ENCODE measurements at regions of chr7 and their contacts with region 1.

Region 1: DNA sequence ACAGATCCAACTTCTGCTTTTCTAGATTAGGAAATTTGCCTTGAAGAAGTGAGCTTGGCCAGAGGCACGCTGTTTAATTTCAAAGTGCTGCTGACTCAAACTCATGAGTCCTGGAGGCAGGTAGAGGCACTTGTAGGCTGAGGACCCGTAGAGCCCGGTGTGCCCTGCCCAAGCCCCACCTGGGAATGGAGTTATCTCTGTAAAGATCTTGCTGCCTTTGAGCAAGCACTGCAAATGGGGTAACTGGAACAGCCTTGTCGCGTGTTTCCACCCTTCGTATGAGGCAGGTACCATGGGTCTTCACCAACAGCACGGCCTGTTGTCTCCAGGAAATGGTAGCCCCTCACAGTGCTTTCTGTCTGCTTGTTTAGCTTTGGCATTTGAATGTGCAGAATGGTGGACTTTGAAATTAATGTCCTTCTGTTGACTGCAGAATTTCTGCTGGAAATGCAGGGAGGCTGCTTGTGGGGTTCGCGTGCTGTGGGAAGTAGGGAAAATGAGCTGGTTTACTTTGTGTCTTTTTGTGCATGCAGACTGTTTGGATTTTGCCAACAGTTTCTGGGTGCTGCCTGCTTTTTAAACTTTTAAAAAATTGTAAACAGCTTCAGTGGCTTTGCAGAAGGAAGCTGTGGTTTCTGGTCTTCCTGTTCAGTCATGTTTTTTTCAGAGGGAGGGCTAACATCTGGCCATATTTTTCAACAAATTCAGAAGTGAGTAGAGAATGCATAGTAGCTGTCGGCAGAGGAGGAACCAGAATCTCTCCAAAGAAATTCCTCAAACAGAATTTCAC is 27.2 kb downstream of the CCM2 start:
- DNase-seq: peak; percentile 35
- ATAC-seq: peak; percentile 47
- H3K4me3 Mint-ChIP-seq: peak overlapping the region; percentile 75
- H3K27ac Mint-ChIP-seq: peak overlapping the region; percentile 91
- H3K4me1 Mint-ChIP-seq: peaks cover 64% of the 10 kb centered on the region
- H3K27me3 Mint-ChIP-seq: no peaks in the 10 kb centered on the region
- CTCF ChIP-seq: no peak

Region 2: DNA sequence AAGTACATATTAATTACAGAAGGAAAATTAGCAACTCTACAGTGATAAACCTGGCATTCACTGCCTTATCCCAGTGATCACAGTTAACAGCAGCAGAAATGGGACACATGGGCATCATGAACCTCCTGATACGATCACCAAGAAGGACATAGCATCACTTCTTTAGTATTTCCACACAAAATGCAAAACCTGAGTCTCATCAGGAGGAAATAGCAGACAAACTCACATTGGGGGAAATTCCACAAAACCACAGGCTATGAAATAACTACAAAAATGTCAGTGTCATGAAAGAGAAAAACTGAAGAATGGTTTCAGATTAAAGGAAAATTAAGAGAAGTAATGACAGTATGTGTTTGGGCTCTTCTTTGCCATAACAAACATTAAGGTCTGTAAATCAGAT is 129.9 kb before region 1 on chr7:
- CTCF ChIA-PET with region 1: no interaction called
- POLR2A ChIA-PET with region 1: no interaction called
- intact Hi-C with region 1: no loop called
- DNase-seq: no peak
- ATAC-seq: peak; percentile 28
- H3K4me3 Mint-ChIP-seq: no peak overlapping the region
- H3K27ac Mint-ChIP-seq: peak overlapping the region; percentile 32
- H3K4me1 Mint-ChIP-seq: peaks cover 16% of the 10 kb centered on the region
- H3K27me3 Mint-ChIP-seq: no peaks in the 10 kb centered on the region
- CTCF ChIP-seq: no peak

Region 3: DNA sequence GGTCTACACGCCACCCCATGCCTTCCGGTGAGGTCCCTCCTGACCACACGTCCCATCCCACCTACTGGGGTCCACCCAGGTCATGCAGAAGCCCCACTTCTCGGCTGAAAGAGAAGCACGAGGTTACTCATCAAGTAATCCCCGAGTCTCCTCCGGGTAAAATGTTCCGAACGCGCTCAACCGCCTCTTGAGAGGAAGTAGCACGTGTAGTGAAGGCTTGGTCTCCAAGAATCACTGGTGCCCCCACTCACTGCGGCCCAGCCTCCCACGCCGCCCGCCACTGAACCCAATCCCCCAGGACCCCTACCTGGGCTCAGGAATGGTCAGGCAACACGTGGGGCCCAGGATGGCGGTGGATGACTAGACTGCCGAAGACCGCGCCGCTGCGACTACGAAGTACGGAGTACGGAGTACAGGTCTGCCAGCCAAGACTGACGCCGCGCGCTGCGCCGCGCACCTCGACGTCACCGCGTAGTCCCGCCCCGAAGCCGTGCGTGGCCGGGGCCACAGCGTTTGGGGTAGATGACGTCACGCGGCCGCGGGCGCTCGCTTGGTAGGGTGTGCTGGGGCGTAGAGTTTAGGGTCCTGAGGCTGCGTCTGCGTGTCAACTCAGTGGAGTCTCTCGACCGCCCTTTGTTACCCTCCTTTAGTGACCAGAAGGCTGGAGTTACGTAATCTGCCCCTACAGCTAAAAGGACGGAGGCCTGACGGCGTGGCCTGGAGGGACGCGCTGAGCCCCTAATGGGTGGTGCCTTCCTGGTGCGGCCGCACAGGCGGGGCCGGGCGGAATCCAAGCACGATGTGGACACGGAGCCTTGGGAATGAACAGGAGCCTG is 40.7 kb before region 1 on chr7:
- CTCF ChIA-PET with region 1: interaction called, 3 read pairs
- POLR2A ChIA-PET with region 1: interaction called, 30 read pairs
- intact Hi-C with region 1: no loop called
- DNase-seq: peak; percentile 97
- ATAC-seq: peak; percentile 91
- H3K4me3 Mint-ChIP-seq: peak overlapping the region; percentile 100
- H3K27ac Mint-ChIP-seq: peak overlapping the region; percentile 100
- H3K4me1 Mint-ChIP-seq: peaks cover 48% of the 10 kb centered on the region
- H3K27me3 Mint-ChIP-seq: no peaks in the 10 kb centered on the region
- CTCF ChIP-seq: no peak